GM12878 (cell line): ENCODE measurements at regions of chr1 and their contacts with region 1.

Region 1: GRCh38 chr1:181485287-181486097 is 2.2 kb downstream of the CACNA1E start:
- DNase-seq: peak; percentile 53
- ATAC-seq: peak; percentile 63
- H3K4me3 ChIP-seq: peak overlapping the region; percentile 74
- H3K27ac ChIP-seq: peak overlapping the region; percentile 56
- H3K4me1 ChIP-seq: peaks cover 3% of the 10 kb centered on the region; the same call in 1 of the 2 replicates
- H3K27me3 ChIP-seq: no peaks in the 10 kb centered on the region
- CTCF ChIP-seq: no peak; a peak in 1 of 6 replicates
- EP300 ChIP-seq: no peak
- POLR2A ChIP-seq: no peak; the same call in 1 of the 2 replicates
- RAD21 ChIP-seq: no peak

Region 2: GRCh38 chr1:181438013-181438412 is 47.5 kb before region 1 on chr1:
- CTCF ChIA-PET with region 1: interaction called, 3 read pairs
- POLR2A ChIA-PET with region 1: interaction called, 7 read pairs
- RAD21 ChIA-PET with region 1: interaction called, 11 read pairs
- SMC1A ChIA-PET with region 1: interaction called, 5 read pairs
- in situ Hi-C with region 1: no loop called
- intact Hi-C with region 1: no loop called
- DNase-seq: no peak
- ATAC-seq: peak; percentile 78
- H3K4me3 ChIP-seq: no peak overlapping the region
- H3K27ac ChIP-seq: peak overlapping the region; percentile 15; the same call in 1 of the 2 replicates
- H3K4me1 ChIP-seq: peaks cover 18% of the 10 kb centered on the region
- H3K27me3 ChIP-seq: no peaks in the 10 kb centered on the region
- CTCF ChIP-seq: no peak
- EP300 ChIP-seq: 0 out of 4 replicates have a peak, but pooled peaks of 1 of the 2 experiments have one; percentile 16
- POLR2A ChIP-seq: no peak
- RAD21 ChIP-seq: peak; percentile 16; the same call in 1 of the 2 replicates

Region 3: DNA sequence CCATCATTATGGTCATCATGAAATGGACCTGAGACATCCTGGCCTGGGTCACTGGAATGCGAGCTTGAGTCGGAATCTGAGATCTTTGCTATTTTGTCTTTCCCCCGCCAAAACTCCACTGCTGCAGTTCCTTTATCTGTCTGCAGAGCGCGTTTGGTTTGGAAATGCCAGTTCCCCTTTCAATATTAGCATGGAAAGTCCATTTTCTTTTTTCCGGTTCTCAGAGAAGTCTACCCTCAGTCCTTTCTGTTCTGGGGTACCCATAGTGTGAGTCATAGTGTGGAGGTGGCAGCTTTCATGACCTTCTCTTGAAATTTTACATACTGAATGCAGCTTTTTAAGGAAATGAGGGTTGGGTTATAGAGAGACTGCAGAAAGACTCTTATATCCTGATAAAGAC is 12.4 kb after region 1 on chr1:
- CTCF ChIA-PET with region 1: interaction called, 157 read pairs
- POLR2A ChIA-PET with region 1: interaction called, 135 read pairs
- RAD21 ChIA-PET with region 1: interaction called, 41 read pairs
- SMC1A ChIA-PET with region 1: interaction called, 220 read pairs
- in situ Hi-C with region 1: no loop called
- intact Hi-C with region 1: no loop called
- DNase-seq: no peak
- ATAC-seq: peak; percentile 83
- H3K4me3 ChIP-seq: no peak overlapping the region
- H3K27ac ChIP-seq: no peak overlapping the region
- H3K4me1 ChIP-seq: peaks cover 8% of the 10 kb centered on the region; the same call in 1 of the 2 replicates
- H3K27me3 ChIP-seq: no peaks in the 10 kb centered on the region
- CTCF ChIP-seq: peak in 2 of 3 experiments; percentile 37 to 40; a peak in 3 of 6 replicates
- EP300 ChIP-seq: no peak
- POLR2A ChIP-seq: no peak
- RAD21 ChIP-seq: peak; percentile 19; the same call in 1 of the 2 replicates

Region 4: DNA sequence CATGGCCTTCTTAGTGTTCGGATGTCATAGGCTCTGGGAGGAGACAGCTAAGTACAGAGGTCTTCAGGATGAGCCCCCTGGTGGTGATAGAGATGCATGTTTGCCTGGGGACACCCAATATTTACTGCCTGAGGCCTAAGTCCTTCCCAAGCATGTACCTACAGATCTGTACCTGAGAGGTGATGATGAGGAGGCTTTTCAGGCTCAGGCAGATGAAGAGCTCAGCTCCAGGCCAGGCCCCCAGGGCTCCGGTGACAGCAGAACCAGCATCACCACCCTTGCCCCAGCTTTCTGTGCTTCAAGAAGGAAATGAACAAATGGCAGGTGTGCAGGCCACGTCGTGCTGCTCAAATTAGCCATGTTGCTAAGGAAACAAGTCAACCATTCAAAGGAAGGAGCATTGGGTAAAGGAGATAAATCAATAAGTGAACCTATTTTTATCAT is 18.9 kb after region 1 on chr1:
- CTCF ChIA-PET with region 1: interaction called, 157 read pairs
- POLR2A ChIA-PET with region 1: interaction called, 135 read pairs
- RAD21 ChIA-PET with region 1: interaction called, 278 read pairs
- SMC1A ChIA-PET with region 1: interaction called, 220 read pairs
- in situ Hi-C with region 1: no loop called
- intact Hi-C with region 1: loop called (anchors 1 kb)
- DNase-seq: no peak
- ATAC-seq: peak; percentile 77
- H3K4me3 ChIP-seq: peak overlapping the region; percentile 14; the same call in 1 of the 2 replicates
- H3K27ac ChIP-seq: peak overlapping the region; percentile 88
- H3K4me1 ChIP-seq: peaks cover 60% of the 10 kb centered on the region
- H3K27me3 ChIP-seq: no peaks in the 10 kb centered on the region
- CTCF ChIP-seq: peak; percentile 50 to 73 (median 70)
- EP300 ChIP-seq: no peak
- POLR2A ChIP-seq: peak; percentile 42
- RAD21 ChIP-seq: peak; percentile 55

Region 5: GRCh38 chr1:181562395-181562794 is 76.9 kb after region 1 on chr1:
- CTCF ChIA-PET with region 1: interaction called, 5 read pairs
- POLR2A ChIA-PET with region 1: interaction called, 6 read pairs
- RAD21 ChIA-PET with region 1: interaction called, 13 read pairs
- SMC1A ChIA-PET with region 1: interaction called, 34 read pairs
- in situ Hi-C with region 1: no loop called
- intact Hi-C with region 1: loop called (anchors 5 kb)
- DNase-seq: no peak
- ATAC-seq: peak; percentile 73
- H3K4me3 ChIP-seq: no peak overlapping the region
- H3K27ac ChIP-seq: no peak overlapping the region
- H3K4me1 ChIP-seq: no peaks in the 10 kb centered on the region
- H3K27me3 ChIP-seq: no peaks in the 10 kb centered on the region
- CTCF ChIP-seq: no peak; a peak in 1 of 6 replicates
- EP300 ChIP-seq: no peak
- POLR2A ChIP-seq: no peak
- RAD21 ChIP-seq: no peak

Region 6: GRCh38 chr1:181676269-181676668 is 190.8 kb after region 1 on chr1:
- CTCF ChIA-PET with region 1: interaction called, 175 read pairs
- POLR2A ChIA-PET with region 1: no interaction called
- RAD21 ChIA-PET with region 1: interaction called, 49 read pairs
- SMC1A ChIA-PET with region 1: interaction called, 91 read pairs
- in situ Hi-C with region 1: no loop called
- intact Hi-C with region 1: no loop called
- DNase-seq: peak; percentile 11
- ATAC-seq: peak; percentile 91
- H3K4me3 ChIP-seq: no peak overlapping the region
- H3K27ac ChIP-seq: no peak overlapping the region
- H3K4me1 ChIP-seq: no peaks in the 10 kb centered on the region
- H3K27me3 ChIP-seq: no peaks in the 10 kb centered on the region
- CTCF ChIP-seq: peak; percentile 60 to 66 (median 60); a peak in 4 of 6 replicates
- EP300 ChIP-seq: no peak
- POLR2A ChIP-seq: no peak
- RAD21 ChIP-seq: peak; percentile 71